Activated CD8-positive, alpha-beta T cell treated with anti-CD3 and anti-CD28 coated beads, Interleukin-2, amount 10 ng/mL, durations not matched to agents 7 days and 5 days (primary cell): ENCODE measurements at regions of chr4 and their contacts with region 1.

Region 1: GRCh38 chr4:40056716-40057585 is at the start of gene N4BP2:
- DNase-seq: peak; percentile 80
- ATAC-seq: peak; percentile 49
- H3K4me3 Mint-ChIP-seq: peak within 1 kb of the TSS; percentile 93
- H3K27ac Mint-ChIP-seq: peak within 1 kb of the TSS; percentile 96
- H3K4me1 Mint-ChIP-seq: peaks cover 37% of the 10 kb centered on the region
- H3K27me3 Mint-ChIP-seq: peaks cover 8% of the 10 kb centered on the region
- total RNA-seq, gene N4BP2: 25.1 to 29.0 TPM

Region 2: GRCh38 chr4:39846120-39846519 is 210.8 kb before region 1 on chr4:
- CTCF ChIA-PET with region 1: no interaction called
- POLR2A ChIA-PET with region 1: no interaction called
- DNase-seq: no peak
- ATAC-seq: no peak
- H3K4me3 Mint-ChIP-seq: no peak overlapping the region
- H3K27ac Mint-ChIP-seq: no peak overlapping the region
- H3K4me1 Mint-ChIP-seq: no peaks in the 10 kb centered on the region
- H3K27me3 Mint-ChIP-seq: no peaks in the 10 kb centered on the region

Region 3: GRCh38 chr4:40152637-40153036 is 95.7 kb after region 1 on chr4:
- CTCF ChIA-PET with region 1: interaction called, 13 read pairs
- POLR2A ChIA-PET with region 1: interaction called, 3 read pairs
- DNase-seq: no peak
- ATAC-seq: peak; percentile 48
- H3K4me3 Mint-ChIP-seq: peak overlapping the region; percentile 10
- H3K27ac Mint-ChIP-seq: no peak overlapping the region
- H3K4me1 Mint-ChIP-seq: peaks cover 28% of the 10 kb centered on the region
- H3K27me3 Mint-ChIP-seq: no peaks in the 10 kb centered on the region

Region 4: GRCh38 chr4:40193016-40193571 is 136.1 kb after region 1 on chr4:
- CTCF ChIA-PET with region 1: interaction called, 11 read pairs
- POLR2A ChIA-PET with region 1: interaction called, 52 read pairs
- DNase-seq: peak; percentile 71
- ATAC-seq: peak; percentile 31
- H3K4me3 Mint-ChIP-seq: peak overlapping the region; percentile 93
- H3K27ac Mint-ChIP-seq: peak overlapping the region; percentile 96
- H3K4me1 Mint-ChIP-seq: peaks cover 67% of the 10 kb centered on the region
- H3K27me3 Mint-ChIP-seq: no peaks in the 10 kb centered on the region